Aorta (tissue), 5 donors: ENCODE measurements at regions of chr6 and their contacts with region 1.

Region 1: DNA sequence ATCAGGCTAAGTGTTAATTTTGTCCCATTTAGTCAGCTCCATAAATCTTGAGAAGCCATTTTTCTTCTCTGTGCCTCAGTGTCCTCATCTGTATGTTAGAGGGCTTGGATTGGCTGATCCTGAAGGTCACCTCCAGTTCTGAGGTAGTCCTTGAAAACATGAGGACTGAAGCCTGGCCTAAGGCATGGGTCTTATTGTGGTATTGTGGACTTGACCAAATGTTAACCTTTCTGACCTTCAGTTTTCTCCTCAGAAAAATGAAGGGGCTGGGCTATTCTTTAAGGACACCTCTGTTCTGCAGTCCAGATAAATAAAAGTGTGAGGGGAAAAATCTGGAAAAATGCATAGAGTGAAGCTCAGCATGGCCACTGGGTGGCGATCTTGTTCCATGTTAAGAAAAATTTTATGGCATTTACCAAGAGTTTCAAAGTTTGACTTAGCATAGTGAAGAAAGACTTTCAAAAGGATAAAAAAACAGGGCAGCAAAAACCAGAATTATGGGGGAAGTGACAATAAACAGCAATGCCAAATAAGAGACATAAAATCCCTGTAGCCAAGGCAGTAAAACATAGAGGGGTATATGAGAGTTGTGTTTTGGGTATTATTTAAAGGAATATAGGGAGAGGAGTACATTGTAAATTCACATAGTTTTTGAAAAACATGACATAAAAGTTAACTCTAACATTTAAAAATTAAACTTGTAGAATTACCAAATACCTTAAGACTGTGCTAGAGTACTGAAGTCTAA is 13.2 kb upstream of the TFB1M start:
- DNase-seq: peak; percentile 61 to 80
- ATAC-seq: peak; percentile 82
- H3K4me3 ChIP-seq: no peak overlapping the region
- H3K27ac ChIP-seq: no peak overlapping the region
- H3K4me1 ChIP-seq: no peaks in the 10 kb centered on the region
- H3K27me3 ChIP-seq: no peaks in the 10 kb centered on the region

Region 2: GRCh38 chr6:154197196-154197860 is 1130.2 kb before region 1 on chr6:
- intact Hi-C with region 1: no loop called
- DNase-seq: no peak
- ATAC-seq: no peak
- H3K4me3 ChIP-seq: no peak overlapping the region
- H3K27ac ChIP-seq: no peak overlapping the region
- H3K4me1 ChIP-seq: peaks cover 0 to 1% of the 10 kb centered on the region in 2 donors
- H3K27me3 ChIP-seq: no peaks in the 10 kb centered on the region

Region 3: DNA sequence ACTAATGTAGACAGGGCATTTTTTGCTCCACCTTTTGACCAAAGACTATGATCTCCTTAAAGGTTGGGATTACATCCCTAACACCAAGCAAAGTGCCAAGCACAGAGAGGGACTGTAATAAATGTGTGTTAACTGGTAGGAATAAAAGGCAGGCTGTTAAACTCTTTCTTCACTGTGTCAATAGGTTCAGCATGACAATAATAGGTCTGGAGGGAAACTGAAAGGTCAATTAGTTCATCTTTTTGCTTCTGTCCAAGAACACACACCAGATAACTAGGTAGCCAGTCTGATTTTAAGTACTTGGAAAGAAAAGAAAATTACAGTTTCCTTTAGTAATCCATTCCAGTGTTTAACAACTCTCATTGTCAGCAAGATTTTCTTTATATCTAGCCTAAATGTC is 191.8 kb after region 1 on chr6:
- intact Hi-C with region 1: no loop called
- DNase-seq: no peak
- ATAC-seq: no peak
- H3K4me3 ChIP-seq: no peak overlapping the region
- H3K27ac ChIP-seq: no peak overlapping the region
- H3K4me1 ChIP-seq: no peaks in the 10 kb centered on the region
- H3K27me3 ChIP-seq: no peaks in the 10 kb centered on the region

Region 4: DNA sequence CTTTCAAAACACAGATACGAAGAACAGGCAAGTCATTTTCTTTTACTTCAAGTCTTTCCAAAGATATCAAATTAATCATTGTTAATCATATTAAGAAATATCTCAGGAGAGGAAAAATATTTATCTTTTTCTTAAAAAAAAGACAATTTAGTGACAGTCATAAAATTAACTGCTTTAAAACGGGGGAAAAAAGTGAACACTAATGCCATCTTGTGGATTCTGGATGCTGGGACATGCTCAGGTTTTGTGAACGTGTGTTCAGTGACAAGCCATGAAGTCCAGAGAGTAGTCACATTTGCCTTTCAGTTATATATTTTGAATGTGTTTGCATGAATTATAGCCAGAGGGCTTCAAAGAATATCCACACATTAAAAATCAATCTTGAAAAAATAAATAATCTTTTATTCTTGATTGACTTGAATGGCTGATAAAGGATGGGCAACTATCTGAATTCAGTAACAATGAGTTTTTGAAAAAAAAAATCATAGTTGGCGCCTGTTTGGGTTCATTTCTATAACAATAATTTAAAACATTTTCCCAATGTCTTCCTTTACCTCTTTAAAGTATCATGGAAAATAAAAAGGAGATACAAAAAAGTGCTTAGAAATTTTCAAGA is 202.8 kb after region 1 on chr6:
- intact Hi-C with region 1: loop called (anchors 2 kb)
- DNase-seq: no peak
- ATAC-seq: peak; percentile 81
- H3K4me3 ChIP-seq: no peak overlapping the region
- H3K27ac ChIP-seq: no peak overlapping the region
- H3K4me1 ChIP-seq: no peaks in the 10 kb centered on the region
- H3K27me3 ChIP-seq: no peaks in the 10 kb centered on the region